ENCODE measurements at regions of chr1 and their contacts with region 1.

Region 1: GRCh38 chr1:17494114-17494729 is 45.3 kb upstream of the ARHGEF10L start:
- DNase-seq: peak; percentile 42 to 82 (median 67)
- ATAC-seq: peak; percentile 69 to 89 (median 84)
- H3K4me3 ChIP-seq: no peak overlapping the region
- H3K27ac ChIP-seq: no peak overlapping the region
- H3K4me1 ChIP-seq: no peaks in the 10 kb centered on the region
- H3K27me3 ChIP-seq: peaks cover 0 to 7% (median 0%) of the 10 kb centered on the region in 9 donors
- CTCF ChIP-seq: peak; percentile 76 to 87 (median 84)
- POLR2A ChIP-seq: no peak

Region 2: GRCh38 chr1:17826165-17826488 is 331.9 kb after region 1 on chr1:
- intact Hi-C with region 1: loop called in 3 of 10 experiments (anchors 10 kb)
- DNase-seq: peak; percentile 23 to 74 (median 45)
- ATAC-seq: peak in 3 of 4 donors; percentile 10 to 45 (median 33)
- H3K4me3 ChIP-seq: no peak overlapping the region
- H3K27ac ChIP-seq: no peak overlapping the region
- H3K4me1 ChIP-seq: peaks cover 0 to 9% (median 0%) of the 10 kb centered on the region in 12 donors
- H3K27me3 ChIP-seq: peaks cover 0 to 8% (median 0%) of the 10 kb centered on the region in 9 donors
- CTCF ChIP-seq: peak; percentile 39 to 69 (median 54)
- POLR2A ChIP-seq: no peak

Region 3: GRCh38 chr1:18100491-18101063 is 606.4 kb after region 1 on chr1:
- intact Hi-C with region 1: loop called in 2 of 10 experiments (anchors 10 kb)
- DNase-seq: peak in 4 of 5 donors; percentile 26 to 57 (median 40)
- ATAC-seq: peak; percentile 34 to 62 (median 52)
- H3K4me3 ChIP-seq: no peak overlapping the region
- H3K27ac ChIP-seq: no peak overlapping the region
- H3K4me1 ChIP-seq: no peaks in the 10 kb centered on the region
- H3K27me3 ChIP-seq: peaks cover 0 to 46% (median 12%) of the 10 kb centered on the region in 9 donors
- CTCF ChIP-seq: peak; percentile 58 to 78 (median 70)
- POLR2A ChIP-seq: no peak

Region 4: GRCh38 chr1:18575620-18576019 is 1081.4 kb after region 1 on chr1:
- intact Hi-C with region 1: loop called in 5 of 10 experiments (anchors 5 to 10 kb)
- DNase-seq: peak in 2 of 5 donors; percentile 56 to 78
- ATAC-seq: peak in 1 of 4 donors; percentile 65
- H3K4me3 ChIP-seq: no peak overlapping the region
- H3K27ac ChIP-seq: no peak overlapping the region
- H3K4me1 ChIP-seq: no peaks in the 10 kb centered on the region
- H3K27me3 ChIP-seq: peaks cover 0 to 51% (median 7%) of the 10 kb centered on the region in 9 donors
- CTCF ChIP-seq: peak in 11 of 12 donors; percentile 14 to 83 (median 62)
- POLR2A ChIP-seq: no peak

Region 5: GRCh38 chr1:18581420-18581880 is 1087.2 kb after region 1 on chr1:
- intact Hi-C with region 1: loop called in 5 of 10 experiments (anchors 5 to 10 kb)
- DNase-seq: peak in 1 of 5 donors; percentile 35
- ATAC-seq: peak in 3 of 4 donors; percentile 29 to 41 (median 29)
- H3K4me3 ChIP-seq: no peak overlapping the region
- H3K27ac ChIP-seq: no peak overlapping the region
- H3K4me1 ChIP-seq: peaks cover 0 to 17% (median 0%) of the 10 kb centered on the region in 12 donors
- H3K27me3 ChIP-seq: peaks cover 0 to 29% (median 0%) of the 10 kb centered on the region in 9 donors
- CTCF ChIP-seq: peak; percentile 47 to 77 (median 64)
- POLR2A ChIP-seq: no peak

Measured in heart left ventricle (tissue), 16 donors.